Endothelial cell of umbilical vein (primary cell): ENCODE measurements at regions of chr4 and their contacts with region 1.

Region 1: GRCh38 chr4:31674313-31674947 is 954.3 kb downstream of the PCDH7 start:
- DNase-seq: peak; percentile 44
- H3K4me3 ChIP-seq: no peak overlapping the region
- H3K27ac ChIP-seq: no peak overlapping the region
- H3K4me1 ChIP-seq: no peaks in the 10 kb centered on the region
- H3K27me3 ChIP-seq: no peaks in the 10 kb centered on the region
- CTCF ChIP-seq: peak; percentile 44 to 52
- POLR2A ChIP-seq: no peak

Region 2: GRCh38 chr4:31045724-31046318 is 628.6 kb before region 1 on chr4:
- CTCF ChIA-PET with region 1: interaction called, 63 read pairs
- POLR2A ChIA-PET with region 1: no interaction called
- dilution Hi-C with region 1: no loop called
- intact Hi-C with region 1: loop called (anchors 1 kb)
- DNase-seq: peak; percentile 74
- H3K4me3 ChIP-seq: no peak overlapping the region
- H3K27ac ChIP-seq: no peak overlapping the region
- H3K4me1 ChIP-seq: no peaks in the 10 kb centered on the region
- H3K27me3 ChIP-seq: no peaks in the 10 kb centered on the region
- CTCF ChIP-seq: peak; percentile 40 to 49
- POLR2A ChIP-seq: no peak

Region 3: DNA sequence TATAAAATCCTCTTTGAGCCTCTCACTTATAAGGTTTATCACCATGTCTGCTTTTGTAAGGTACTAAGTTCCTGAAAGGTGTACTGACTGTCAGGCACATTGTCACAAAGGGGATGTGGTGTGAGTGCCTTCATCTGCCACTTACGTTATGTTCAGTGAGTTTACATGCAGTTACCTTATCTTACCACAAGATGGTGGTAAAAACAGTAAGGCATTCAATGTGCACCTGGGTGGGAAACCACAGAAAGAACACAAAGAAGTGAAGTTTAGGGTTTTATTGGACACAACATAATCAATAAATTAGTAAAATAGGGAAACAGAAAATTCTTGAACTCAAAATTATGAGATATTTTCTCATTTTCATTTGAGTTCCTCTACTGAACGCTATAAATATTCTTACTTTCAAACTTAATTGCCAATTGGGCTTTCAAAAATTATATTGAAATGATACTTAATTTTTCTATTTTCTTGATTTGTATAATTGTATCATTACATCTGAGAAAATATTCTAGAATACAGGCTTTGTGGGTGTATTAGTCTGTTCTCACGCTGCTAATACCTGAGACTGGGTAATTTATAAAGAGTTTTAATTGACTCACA is 303.5 kb before region 1 on chr4:
- CTCF ChIA-PET with region 1: interaction called, 15 read pairs
- POLR2A ChIA-PET with region 1: no interaction called
- dilution Hi-C with region 1: no loop called
- intact Hi-C with region 1: loop called (anchors 1 kb)
- DNase-seq: peak; percentile 60
- H3K4me3 ChIP-seq: no peak overlapping the region
- H3K27ac ChIP-seq: no peak overlapping the region
- H3K4me1 ChIP-seq: no peaks in the 10 kb centered on the region
- H3K27me3 ChIP-seq: no peaks in the 10 kb centered on the region
- CTCF ChIP-seq: peak; percentile 53 to 62
- POLR2A ChIP-seq: no peak

Region 4: GRCh38 chr4:31692402-31692940 is 18.0 kb after region 1 on chr4:
- CTCF ChIA-PET with region 1: interaction called, 10 read pairs
- POLR2A ChIA-PET with region 1: no interaction called
- dilution Hi-C with region 1: no loop called
- intact Hi-C with region 1: no loop called
- DNase-seq: peak; percentile 33
- H3K4me3 ChIP-seq: no peak overlapping the region
- H3K27ac ChIP-seq: no peak overlapping the region
- H3K4me1 ChIP-seq: no peaks in the 10 kb centered on the region
- H3K27me3 ChIP-seq: no peaks in the 10 kb centered on the region
- CTCF ChIP-seq: peak in 1 of 2 donors; percentile 20
- POLR2A ChIP-seq: no peak